Uterus (tissue), 4 donors: ENCODE measurements at regions of chr5 and their contacts with region 1.

Region 1: GRCh38 chr5:159100025-159100781 is 487 bp upstream of the EBF1 start:
- DNase-seq: peak; percentile 93 to 96
- H3K4me3 ChIP-seq: peak overlapping the region; percentile 56 to 84
- H3K27ac ChIP-seq: peak overlapping the region; percentile 87 to 98
- H3K4me1 ChIP-seq: no peaks in the 10 kb centered on the region
- H3K27me3 ChIP-seq: no peaks in the 10 kb centered on the region
- CTCF ChIP-seq: no peak
- POLR2A ChIP-seq: peak; percentile 96 to 99

Region 2: DNA sequence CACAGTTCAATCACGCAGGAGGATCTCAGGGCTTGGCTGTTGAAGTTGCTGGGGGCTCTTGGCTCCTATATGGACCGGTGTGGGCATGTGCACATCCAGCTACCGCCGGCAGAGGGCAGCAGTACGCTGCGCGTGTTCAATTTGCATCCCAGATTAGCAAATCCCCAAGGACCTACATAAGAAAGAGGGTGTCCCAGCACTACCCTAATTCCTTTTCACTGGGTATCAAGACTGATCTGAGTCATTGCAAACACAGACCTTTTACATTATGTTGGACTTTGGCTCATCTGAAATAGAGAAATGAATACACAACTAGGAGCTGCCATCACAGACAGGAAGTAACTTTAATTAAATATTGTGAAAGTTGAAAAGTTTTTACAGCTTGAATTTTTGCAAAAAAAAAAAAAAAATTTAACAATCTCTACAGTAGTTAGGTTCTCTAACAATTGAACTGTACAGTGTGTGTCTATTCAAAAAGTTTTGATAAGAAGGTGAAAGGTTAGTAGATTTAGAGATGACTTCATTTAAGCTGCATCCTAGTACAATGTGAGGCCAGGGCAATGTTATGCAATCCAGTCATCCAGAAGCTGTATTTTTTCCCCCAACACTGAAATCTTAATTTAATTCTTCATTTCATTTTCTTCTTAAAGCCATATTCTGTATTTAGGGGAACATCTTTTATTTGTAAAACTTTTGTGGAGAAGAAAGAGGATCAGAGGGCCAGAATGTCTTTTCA is 404.4 kb before region 1 on chr5:
- intact Hi-C with region 1: loop called (anchors 5 kb)
- DNase-seq: peak; percentile 76 to 80
- H3K4me3 ChIP-seq: no peak overlapping the region
- H3K27ac ChIP-seq: peak overlapping the region; percentile 30 to 64
- H3K4me1 ChIP-seq: peaks cover 6 to 15% of the 10 kb centered on the region in 2 donors
- H3K27me3 ChIP-seq: no peaks in the 10 kb centered on the region
- CTCF ChIP-seq: peak; percentile 92 to 97 (median 95)
- POLR2A ChIP-seq: no peak

Region 3: GRCh38 chr5:159058716-159059636 is 41.2 kb before region 1 on chr5:
- intact Hi-C with region 1: loop called (anchors 5 kb)
- DNase-seq: no peak
- H3K4me3 ChIP-seq: no peak overlapping the region
- H3K27ac ChIP-seq: peak overlapping the region; percentile 53 to 86
- H3K4me1 ChIP-seq: peaks cover 0 to 10% of the 10 kb centered on the region in 2 donors
- H3K27me3 ChIP-seq: no peaks in the 10 kb centered on the region
- CTCF ChIP-seq: no peak
- POLR2A ChIP-seq: no peak

Region 4: DNA sequence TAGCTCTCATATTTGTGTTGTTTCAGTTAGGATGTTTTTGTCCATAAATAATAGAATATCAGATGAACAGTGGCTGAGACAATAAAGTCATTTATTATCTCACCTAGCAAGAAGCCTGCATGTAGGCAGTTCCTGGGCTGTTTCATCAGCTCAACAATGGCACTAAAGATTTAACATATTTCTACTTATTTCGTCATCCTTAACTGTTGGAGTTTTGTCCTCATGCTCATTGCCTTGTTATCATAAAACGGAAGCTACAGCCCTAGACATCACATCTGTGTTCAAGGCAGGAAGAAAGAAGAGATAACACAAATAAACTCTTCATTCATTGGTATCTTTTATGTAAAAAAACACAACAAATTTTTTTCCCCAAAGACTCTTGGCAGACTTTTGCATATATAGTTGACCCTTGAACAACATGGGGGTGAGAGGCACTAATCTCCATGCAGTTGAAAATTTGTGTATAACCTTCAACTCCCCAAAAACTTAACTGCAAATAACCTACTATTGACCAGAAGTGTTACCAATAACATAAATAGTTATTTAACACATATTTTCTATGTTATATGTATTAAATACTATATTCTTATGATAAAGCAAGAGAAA is 538.9 kb after region 1 on chr5:
- intact Hi-C with region 1: no loop called
- DNase-seq: no peak
- H3K4me3 ChIP-seq: no peak overlapping the region
- H3K27ac ChIP-seq: no peak overlapping the region
- H3K4me1 ChIP-seq: no peaks in the 10 kb centered on the region
- H3K27me3 ChIP-seq: no peaks in the 10 kb centered on the region
- CTCF ChIP-seq: no peak
- POLR2A ChIP-seq: no peak